Common myeloid progenitor, CD34-positive (primary cell): ENCODE measurements at regions of chr4 and their contacts with region 1.

Region 1: DNA sequence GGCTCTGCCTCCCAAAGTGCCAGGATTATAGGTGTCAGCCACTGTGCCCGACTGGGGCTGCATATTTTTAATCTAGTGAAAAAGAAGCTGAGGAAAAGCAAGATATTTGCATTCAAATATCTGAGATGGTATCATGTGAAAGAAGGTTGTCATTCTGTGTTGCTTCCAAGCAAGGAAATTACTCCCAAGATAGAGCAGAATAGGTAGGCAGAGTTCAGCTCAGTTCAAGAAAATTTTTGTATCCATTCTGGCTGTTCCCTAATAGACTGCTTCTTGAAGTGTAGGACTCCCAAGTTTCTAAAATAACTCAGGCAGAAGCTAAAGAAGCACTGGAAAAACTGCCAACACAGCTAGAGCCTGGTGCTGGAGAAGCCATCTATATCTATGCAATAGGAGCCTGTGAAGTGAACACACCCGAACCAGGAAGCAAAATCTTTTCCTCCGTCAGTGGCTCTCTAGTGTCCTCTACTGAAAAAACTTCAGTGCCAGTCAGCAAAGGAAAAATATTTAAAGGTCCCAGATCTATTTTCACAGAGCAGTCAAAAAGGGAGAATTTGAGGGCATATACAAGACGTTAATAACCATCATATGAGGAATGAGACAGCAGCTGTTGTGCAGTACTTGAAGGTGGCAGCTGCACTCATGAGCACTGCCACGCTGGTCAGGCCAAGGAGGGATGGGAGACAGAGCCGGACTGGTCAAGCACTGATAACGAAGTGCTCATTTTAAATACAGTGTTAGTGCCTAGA is 14.2 kb downstream of the MCUB start:
- DNase-seq: peak; percentile 14 to 49 (median 49)
- H3K4me3 ChIP-seq: no peak overlapping the region
- H3K27ac ChIP-seq: no peak overlapping the region
- H3K4me1 ChIP-seq: peaks cover 2 to 12% (median 9%) of the 10 kb centered on the region in 4 experiments
- H3K27me3 ChIP-seq: no peaks in the 10 kb centered on the region

Region 2: GRCh38 chr4:109559983-109560686 is 14.1 kb before region 1 on chr4 and contains the start of gene MCUB:
- CTCF ChIA-PET with region 1: interaction called, 17 read pairs
- POLR2A ChIA-PET with region 1: interaction called, 4 read pairs
- DNase-seq: peak; percentile 90 to 96 (median 95)
- H3K4me3 ChIP-seq: peak within 1 kb of the TSS; percentile 68 to 95 (median 89)
- H3K27ac ChIP-seq: peak within 1 kb of the TSS; percentile 54 to 83
- H3K4me1 ChIP-seq: peaks cover 14 to 38% (median 23%) of the 10 kb centered on the region in 4 experiments
- H3K27me3 ChIP-seq: no peaks in the 10 kb centered on the region